Psoas muscle (tissue), 8 donors: ENCODE measurements at regions of chrX and their contacts with region 1.

Region 1: DNA sequence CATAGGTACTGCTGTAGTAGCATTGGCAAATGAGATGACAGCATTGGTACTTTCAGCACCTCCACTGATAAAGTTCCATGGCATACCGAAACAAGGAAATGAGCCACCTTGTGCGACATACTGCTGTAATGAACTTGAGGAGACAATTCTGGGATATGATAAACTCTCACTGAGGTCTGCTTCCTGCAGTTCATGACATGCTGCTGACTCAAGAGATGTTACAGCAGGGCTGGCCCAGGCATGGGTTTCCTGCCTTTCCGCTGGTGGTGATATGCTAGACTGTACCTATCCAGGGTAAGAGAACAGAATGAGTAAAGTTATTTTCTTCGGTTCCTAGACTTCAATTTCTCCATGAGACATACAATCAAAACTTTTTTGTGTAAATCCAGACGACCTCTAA is 17.1 kb downstream of the BEND2 start:
- DNase-seq: no peak
- ATAC-seq: no peak
- H3K4me3 ChIP-seq: no peak overlapping the region
- H3K27ac ChIP-seq: no peak overlapping the region
- H3K4me1 ChIP-seq: no peaks in the 10 kb centered on the region
- H3K27me3 ChIP-seq: peaks cover 0 to 3% (median 0%) of the 10 kb centered on the region in 3 donors
- CTCF ChIP-seq: no peak

Region 2: DNA sequence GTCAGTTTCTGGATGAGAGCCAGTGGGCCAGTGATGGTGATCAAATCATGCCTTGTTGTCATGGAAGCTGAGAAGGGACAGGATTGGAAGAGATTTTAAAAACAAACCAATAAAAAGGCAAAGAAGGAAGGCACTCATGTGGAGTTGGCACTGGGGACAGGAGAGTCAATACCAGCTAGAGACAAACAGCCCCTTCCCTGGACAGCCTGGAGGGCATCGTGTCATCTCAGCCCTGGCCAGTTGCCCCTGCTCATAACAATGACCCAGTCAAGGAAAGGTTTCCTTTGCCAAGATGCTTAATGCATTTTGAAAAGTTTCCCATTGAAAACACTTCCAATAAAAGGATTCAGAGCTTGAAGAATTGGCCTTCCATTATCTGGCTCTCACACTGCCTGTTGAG is 410.8 kb before region 1 on chrX:
- intact Hi-C with region 1: loop called in 1 of 2 experiments (anchors 10 kb)
- DNase-seq: no peak
- ATAC-seq: no peak
- H3K4me3 ChIP-seq: no peak overlapping the region
- H3K27ac ChIP-seq: no peak overlapping the region
- H3K4me1 ChIP-seq: no peaks in the 10 kb centered on the region
- H3K27me3 ChIP-seq: peaks cover 0 to 5% (median 0%) of the 10 kb centered on the region in 3 donors
- CTCF ChIP-seq: no peak